ENCODE measurements at regions of chr16 and their contacts with region 1.

Region 1: DNA sequence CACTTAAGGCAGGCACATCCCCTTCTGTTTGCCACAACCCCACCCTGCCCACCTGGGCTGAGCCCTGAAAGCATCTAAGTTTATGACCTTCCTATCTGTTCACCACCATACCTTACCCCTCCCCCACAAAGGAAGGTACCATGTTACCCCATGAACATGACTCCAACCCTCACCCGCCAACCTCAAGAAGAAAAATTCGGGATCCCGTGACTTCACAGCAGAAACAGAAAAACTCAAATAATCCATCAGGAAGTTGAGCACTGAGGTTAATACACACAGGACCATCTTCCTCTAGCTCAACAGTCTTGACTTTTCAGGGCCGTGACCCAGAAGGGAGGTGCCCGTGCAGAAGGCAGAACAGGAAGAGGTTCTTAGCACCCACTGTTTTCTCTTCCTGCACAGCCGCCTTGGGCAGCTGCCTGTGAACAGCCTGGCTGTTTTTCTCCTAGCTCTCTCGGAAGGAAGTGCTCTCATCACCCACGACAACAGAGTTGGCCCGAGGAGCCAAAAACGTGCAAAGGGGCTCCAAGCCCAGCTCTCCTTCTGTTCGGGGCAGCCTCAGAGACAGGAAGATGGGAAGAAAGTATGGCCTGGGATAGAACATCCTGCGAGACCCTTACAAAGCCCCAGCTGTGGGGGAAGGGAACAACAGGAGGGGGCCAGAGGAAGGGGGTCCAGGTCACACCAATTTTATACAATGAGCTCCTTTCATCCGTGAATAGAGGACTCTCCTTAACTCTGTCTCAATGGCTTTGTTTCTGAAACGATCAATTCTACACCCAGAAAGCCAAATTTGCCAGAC is 101.1 kb downstream of the XYLT1 start:
- DNase-seq: peak; percentile 93
- H3K4me3 Mint-ChIP-seq: peak overlapping the region; percentile 86
- H3K27ac Mint-ChIP-seq: peak overlapping the region; percentile 96
- H3K4me1 Mint-ChIP-seq: peaks cover 84% of the 10 kb centered on the region
- H3K27me3 Mint-ChIP-seq: no peaks in the 10 kb centered on the region

Region 2: DNA sequence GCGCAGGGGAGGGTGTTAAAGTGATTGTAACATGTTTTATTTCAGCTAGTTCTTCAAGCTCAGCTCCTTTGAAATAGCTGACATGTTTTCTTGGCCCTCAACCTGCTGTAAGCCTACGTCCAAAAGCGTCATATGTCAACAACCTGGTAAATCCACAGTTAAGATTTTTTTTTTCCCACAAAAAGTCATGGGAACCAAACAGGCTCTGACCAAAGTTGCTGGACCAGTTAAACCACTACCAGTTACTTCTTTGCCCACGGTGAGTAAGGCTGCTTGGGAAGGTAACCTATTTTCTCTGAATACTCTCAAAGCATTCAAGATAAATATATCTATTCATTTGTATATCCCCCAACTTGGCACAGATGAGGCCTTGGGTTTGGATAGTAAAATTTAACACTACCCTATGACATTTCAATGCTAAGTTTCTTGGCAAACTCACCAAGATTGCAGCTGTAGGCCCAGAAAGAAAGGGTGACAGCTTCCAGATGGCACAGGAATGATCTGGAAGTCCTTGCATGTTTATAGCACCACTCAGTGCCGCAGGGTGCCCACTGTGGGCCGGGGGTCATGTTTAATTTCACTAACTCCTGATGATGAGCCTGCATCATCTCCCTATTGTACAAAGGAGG is 65.0 kb before region 1 on chr16:
- intact Hi-C with region 1: loop called (anchors 5 kb)
- DNase-seq: no peak
- H3K4me3 Mint-ChIP-seq: peak overlapping the region; percentile 28
- H3K27ac Mint-ChIP-seq: peak overlapping the region; percentile 7
- H3K4me1 Mint-ChIP-seq: peaks cover 41% of the 10 kb centered on the region
- H3K27me3 Mint-ChIP-seq: no peaks in the 10 kb centered on the region

Region 3: DNA sequence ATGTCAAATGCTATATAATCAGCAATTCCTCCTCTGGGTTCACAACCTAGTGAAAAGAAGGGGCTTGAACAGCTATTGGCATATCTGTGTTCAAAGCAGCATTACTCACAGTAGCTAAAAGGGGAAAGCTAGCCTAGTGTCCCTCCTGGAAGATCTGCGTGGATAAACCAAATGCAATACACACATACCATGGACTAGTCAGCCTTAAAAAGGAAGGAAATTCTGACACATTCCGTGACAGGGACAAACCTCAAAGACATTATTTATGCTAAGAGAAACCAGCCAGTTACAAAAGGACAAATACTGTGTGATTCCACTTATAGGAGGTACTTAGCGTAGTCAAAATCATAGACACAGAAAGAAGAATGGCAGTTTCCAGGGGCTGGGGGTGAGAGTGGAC is 11.0 kb after region 1 on chr16:
- intact Hi-C with region 1: no loop called
- DNase-seq: peak; percentile 50
- H3K4me3 Mint-ChIP-seq: peak overlapping the region; percentile 49
- H3K27ac Mint-ChIP-seq: peak overlapping the region; percentile 81
- H3K4me1 Mint-ChIP-seq: peaks cover 60% of the 10 kb centered on the region
- H3K27me3 Mint-ChIP-seq: no peaks in the 10 kb centered on the region

Region 4: GRCh38 chr16:17744903-17745575 is 375.4 kb after region 1 on chr16:
- intact Hi-C with region 1: no loop called
- DNase-seq: no peak
- H3K4me3 Mint-ChIP-seq: no peak overlapping the region
- H3K27ac Mint-ChIP-seq: no peak overlapping the region
- H3K4me1 Mint-ChIP-seq: no peaks in the 10 kb centered on the region
- H3K27me3 Mint-ChIP-seq: no peaks in the 10 kb centered on the region